ENCODE measurements at regions of chrX and their contacts with region 1.

Region 1: DNA sequence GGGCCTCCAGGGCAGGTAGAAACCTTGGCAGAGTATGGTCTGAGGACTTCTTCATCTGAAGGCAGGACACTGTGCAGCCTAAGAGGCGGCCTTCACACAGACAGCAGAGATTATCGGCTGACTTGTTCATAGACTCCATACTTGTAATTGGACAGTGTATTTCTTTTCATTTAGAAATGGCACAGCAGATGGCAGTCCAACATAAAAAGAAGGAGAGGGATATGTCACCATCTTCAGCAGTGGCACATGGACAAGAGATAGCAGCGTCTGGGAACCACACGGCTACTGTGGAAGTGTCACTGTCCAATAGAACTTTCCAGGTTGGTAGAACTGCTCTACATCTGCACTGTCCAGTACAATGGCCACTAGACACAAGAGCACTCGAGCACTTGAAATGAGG is 21.7 kb upstream of the GEMIN8 start:
- DNase-seq: peak; percentile 46
- ATAC-seq: peak; percentile 58; the same call in 1 of the 2 replicates
- H3K4me3 ChIP-seq: no peak overlapping the region
- H3K27ac ChIP-seq: no peak overlapping the region
- H3K4me1 ChIP-seq: no peaks in the 10 kb centered on the region
- H3K27me3 ChIP-seq: peaks cover 3% of the 10 kb centered on the region
- CTCF ChIP-seq: peak; percentile 46

Region 2: DNA sequence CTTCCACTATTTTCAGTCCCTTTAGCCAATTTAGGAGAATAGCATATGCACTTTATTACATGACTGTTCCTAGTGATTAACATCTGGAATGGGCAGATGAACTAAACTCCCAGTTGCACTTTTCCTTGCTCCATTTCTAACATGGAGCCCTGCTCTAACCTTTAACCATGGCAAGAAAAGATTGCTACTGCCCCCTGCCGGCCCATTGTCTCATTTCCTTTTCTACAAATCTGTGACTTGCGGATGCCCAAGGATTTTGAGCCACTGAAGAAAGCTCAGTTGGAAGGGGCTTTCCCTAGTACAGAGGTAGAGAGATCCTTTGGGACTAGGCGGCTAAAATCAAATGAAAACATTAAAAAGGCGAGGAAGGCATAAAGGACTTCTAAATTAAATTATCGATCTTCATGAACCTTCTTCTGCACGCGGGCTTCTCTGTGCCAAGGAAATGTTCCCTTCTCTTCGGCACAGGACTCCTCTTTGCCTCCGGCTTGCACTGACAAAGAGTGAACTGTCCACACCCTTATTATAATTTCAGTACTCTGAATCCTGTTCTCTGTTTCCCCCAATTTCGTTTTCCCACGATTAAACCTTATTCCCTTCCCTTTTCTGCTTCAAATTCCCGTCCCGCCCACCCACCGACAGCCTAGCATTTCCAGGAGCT is 477.3 kb after region 1 on chrX:
- CTCF ChIA-PET with region 1: no interaction called
- POLR2A ChIA-PET with region 1: no interaction called
- intact Hi-C with region 1: loop called (anchors 5 kb)
- DNase-seq: peak; percentile 71
- ATAC-seq: no peak; the same call in 1 of the 2 replicates
- H3K4me3 ChIP-seq: no peak overlapping the region
- H3K27ac ChIP-seq: no peak overlapping the region
- H3K4me1 ChIP-seq: peaks cover 6% of the 10 kb centered on the region; the same call in 1 of the 2 replicates
- H3K27me3 ChIP-seq: no peaks in the 10 kb centered on the region
- CTCF ChIP-seq: peak; percentile 69

Region 3: GRCh38 chrX:15335135-15336022 is 1284.0 kb after region 1 on chrX and contains the start of gene PIGA:
- CTCF ChIA-PET with region 1: no interaction called
- POLR2A ChIA-PET with region 1: no interaction called
- intact Hi-C with region 1: loop called (anchors 10 kb)
- DNase-seq: peak; percentile 98
- ATAC-seq: peak; percentile 96
- H3K4me3 ChIP-seq: peak within 1 kb of the TSS; percentile 86
- H3K27ac ChIP-seq: peak within 1 kb of the TSS; percentile 75
- H3K4me1 ChIP-seq: peaks cover 19% of the 10 kb centered on the region
- H3K27me3 ChIP-seq: peaks cover 17% of the 10 kb centered on the region
- CTCF ChIP-seq: no peak
- total RNA-seq, gene PIGA: 11.5 and 17.9 TPM in 2 replicates

Measured in PC-3 (cell line).